ENCODE measurements at regions of chr7 and their contacts with region 1.

Region 1: GRCh38 chr7:135286876-135287275 is 53.2 kb downstream of the STRA8 start:
- DNase-seq: no peak
- ATAC-seq: peak in 1 of 8 donors; percentile 25
- H3K4me3 ChIP-seq: no peak overlapping the region
- H3K27ac ChIP-seq: no peak overlapping the region
- H3K4me1 ChIP-seq: peaks cover 0 to 6% (median 0%) of the 10 kb centered on the region in 9 donors
- H3K27me3 ChIP-seq: no peaks in the 10 kb centered on the region
- CTCF ChIP-seq: no peak

Region 2: GRCh38 chr7:135558337-135558767 is 271.5 kb after region 1 on chr7:
- intact Hi-C with region 1: loop called in 6 of 10 experiments (anchors 5 to 10 kb)
- DNase-seq: peak; percentile 23 to 41
- ATAC-seq: peak; percentile 60 to 90 (median 73)
- H3K4me3 ChIP-seq: peak overlapping the region; percentile 68 to 89 (median 82)
- H3K27ac ChIP-seq: peak overlapping the region; percentile 92 to 98 (median 94)
- H3K4me1 ChIP-seq: peaks cover 0 to 31% (median 14%) of the 10 kb centered on the region in 9 donors
- H3K27me3 ChIP-seq: no peaks in the 10 kb centered on the region
- CTCF ChIP-seq: peak; percentile 21 to 71 (median 57)